ENCODE measurements at regions of chr3 and their contacts with region 1.

Region 1: DNA sequence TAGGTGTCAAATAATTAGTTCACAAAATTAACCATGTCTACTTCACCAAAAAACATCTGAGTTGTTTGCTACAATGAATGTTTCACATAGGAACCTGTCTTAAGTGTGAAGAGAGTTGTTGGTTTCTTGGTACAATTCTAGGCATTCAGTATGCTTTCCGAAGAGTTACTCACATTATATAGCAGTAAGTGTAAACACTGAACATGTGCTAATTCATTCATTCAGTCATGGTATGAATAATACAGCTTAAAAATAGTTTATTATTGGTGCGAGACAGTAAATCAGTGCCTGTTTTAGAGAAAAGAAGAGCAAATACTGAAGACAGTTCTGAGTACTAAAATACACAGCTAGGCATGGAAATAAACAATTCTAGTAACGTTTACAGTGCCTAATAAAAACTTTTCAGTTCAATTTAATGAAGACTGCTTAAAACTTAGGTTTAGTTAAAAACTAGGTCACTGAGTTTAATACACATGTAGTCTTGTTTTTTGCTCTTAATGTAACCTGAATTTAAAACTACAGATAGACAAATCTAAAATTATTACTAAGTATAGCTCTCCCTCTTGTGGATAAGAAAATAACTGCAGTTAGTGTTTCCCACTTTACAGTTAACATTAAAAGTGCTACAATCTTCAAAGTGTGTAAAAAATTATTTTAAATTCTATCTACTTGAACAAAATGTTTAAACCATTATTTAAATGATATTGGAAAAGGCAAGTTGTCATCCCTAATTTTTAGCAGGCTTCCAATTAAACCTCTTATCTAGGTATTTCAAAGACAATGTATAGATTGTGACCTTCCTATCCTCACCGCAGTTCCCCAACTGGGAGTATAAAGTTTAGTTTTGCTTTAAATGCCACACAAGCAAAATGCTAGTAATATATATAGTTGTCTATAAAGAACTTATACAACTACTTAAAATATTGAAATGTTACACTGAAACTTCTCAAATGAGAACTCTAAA is 20.1 kb upstream of the ZCWPW2 start:
- DNase-seq: peak in 2 of 9 experiments; percentile 62 to 72
- ATAC-seq: peak; percentile 32
- H3K4me3 ChIP-seq: no peak overlapping the region
- H3K4me3 Mint-ChIP-seq: no peak overlapping the region
- H3K27ac ChIP-seq: peak overlapping the region in 1 of 2 experiments; percentile 21
- H3K27ac Mint-ChIP-seq: peak overlapping the region; percentile 72
- H3K4me1 ChIP-seq: peaks cover 13% of the 10 kb centered on the region
- H3K4me1 Mint-ChIP-seq: peaks cover 31% of the 10 kb centered on the region
- H3K27me3 ChIP-seq: no peaks in the 10 kb centered on the region
- H3K27me3 Mint-ChIP-seq: no peaks in the 10 kb centered on the region
- CTCF ChIP-seq: peak; percentile 83

Region 2: DNA sequence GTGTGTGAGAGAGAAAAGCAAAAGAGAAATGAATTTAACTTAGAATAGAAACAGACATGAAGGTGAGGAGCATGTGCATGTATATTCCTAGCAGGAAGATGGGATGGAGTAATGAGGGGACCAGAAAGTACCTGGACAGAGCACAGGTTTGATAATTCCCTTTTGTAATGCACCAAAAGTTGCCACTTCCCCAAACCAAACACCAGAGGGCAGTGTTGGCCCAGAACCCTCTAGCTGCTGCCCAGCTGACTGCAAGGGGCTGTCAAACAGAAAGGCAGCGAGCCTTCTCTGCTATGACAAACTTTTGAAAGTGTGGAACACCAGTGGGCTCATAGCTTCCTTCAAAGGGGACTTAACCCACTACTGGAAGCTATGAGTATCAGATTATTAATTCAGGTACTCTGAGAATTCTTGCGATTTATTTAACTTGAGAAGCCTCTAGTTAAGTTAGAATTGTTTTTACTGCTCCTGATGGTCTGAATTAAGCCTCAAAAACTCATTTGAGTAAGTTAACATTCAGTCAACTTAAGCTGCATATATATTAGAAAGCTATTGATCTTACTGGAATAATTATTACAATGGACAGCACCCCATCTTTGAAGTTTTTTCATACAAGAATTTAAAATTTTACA is 1194.2 kb before region 1 on chr3:
- CTCF ChIA-PET with region 1: no interaction called
- POLR2A ChIA-PET with region 1: no interaction called
- intact Hi-C with region 1: loop called in 1 of 2 experiments (anchors 2 kb)
- DNase-seq: peak; percentile 5 to 77 (median 61)
- ATAC-seq: peak; percentile 78
- H3K4me3 ChIP-seq: no peak overlapping the region
- H3K4me3 Mint-ChIP-seq: no peak overlapping the region
- H3K27ac ChIP-seq: no peak overlapping the region
- H3K27ac Mint-ChIP-seq: no peak overlapping the region
- H3K4me1 ChIP-seq: no peaks in the 10 kb centered on the region
- H3K4me1 Mint-ChIP-seq: no peaks in the 10 kb centered on the region
- H3K27me3 ChIP-seq: no peaks in the 10 kb centered on the region
- H3K27me3 Mint-ChIP-seq: peaks cover 2% of the 10 kb centered on the region
- CTCF ChIP-seq: peak; percentile 91

Region 3: GRCh38 chr3:27357665-27358258 is 970.7 kb before region 1 on chr3:
- CTCF ChIA-PET with region 1: interaction called, 5 read pairs
- POLR2A ChIA-PET with region 1: no interaction called
- intact Hi-C with region 1: loop called (anchors 5 kb)
- DNase-seq: peak; percentile 11 to 77 (median 54)
- ATAC-seq: peak; percentile 87
- H3K4me3 ChIP-seq: no peak overlapping the region
- H3K4me3 Mint-ChIP-seq: no peak overlapping the region
- H3K27ac ChIP-seq: no peak overlapping the region
- H3K27ac Mint-ChIP-seq: no peak overlapping the region
- H3K4me1 ChIP-seq: peaks cover 13% of the 10 kb centered on the region
- H3K4me1 Mint-ChIP-seq: peaks cover 27% of the 10 kb centered on the region
- H3K27me3 ChIP-seq: no peaks in the 10 kb centered on the region
- H3K27me3 Mint-ChIP-seq: no peaks in the 10 kb centered on the region
- CTCF ChIP-seq: no peak

Region 4: DNA sequence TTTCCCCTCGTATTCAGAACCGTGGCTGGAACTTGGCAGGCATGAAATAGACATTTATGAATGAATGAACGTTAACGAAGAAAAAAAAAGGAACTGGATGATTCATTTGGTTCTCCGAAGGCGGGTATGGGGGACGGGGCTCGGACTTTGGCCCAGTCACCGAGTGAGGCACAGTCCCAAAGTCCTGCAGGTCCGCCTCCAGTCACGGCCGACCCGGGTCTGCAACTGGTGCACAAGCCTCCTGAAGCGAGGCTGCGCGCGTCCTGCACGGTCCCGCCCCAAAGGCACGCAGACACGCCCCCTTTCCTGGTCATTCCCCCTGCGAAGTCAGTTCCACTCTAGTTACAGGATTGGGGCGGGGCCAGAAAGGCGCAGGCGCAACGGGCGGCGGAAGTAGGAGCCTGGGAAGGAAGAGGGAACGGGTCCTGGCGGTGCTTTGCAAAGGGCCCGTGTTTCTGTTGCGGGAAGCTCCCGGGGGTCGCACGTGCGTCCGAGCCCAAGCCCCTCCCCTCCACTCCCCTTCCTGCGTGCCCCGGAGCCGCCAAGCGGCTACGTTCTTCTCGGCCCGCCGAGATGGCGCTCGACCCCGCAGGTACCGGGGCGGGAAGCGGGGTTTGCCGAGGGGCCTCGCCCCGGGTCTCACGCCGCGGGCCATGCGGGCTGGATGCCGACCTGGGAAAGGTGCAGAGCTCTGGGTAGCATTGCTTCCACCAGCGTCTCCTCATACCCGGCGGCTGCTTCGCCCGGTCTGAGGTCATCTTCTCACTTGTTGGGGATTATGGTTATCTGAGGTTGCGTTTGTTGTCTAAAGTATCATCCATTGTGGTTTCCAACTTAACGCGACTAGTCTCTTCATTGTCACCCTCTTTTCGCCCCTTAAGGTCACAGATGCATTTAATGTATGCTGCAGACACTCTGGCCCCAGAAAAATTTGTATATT is 87.0 kb before region 1 on chr3 and contains the start of gene CMC1:
- CTCF ChIA-PET with region 1: interaction called, 3 read pairs
- POLR2A ChIA-PET with region 1: no interaction called
- intact Hi-C with region 1: loop called in 1 of 2 experiments (anchors 5 kb)
- DNase-seq: peak; percentile 68 to 94 (median 90)
- ATAC-seq: peak; percentile 90
- H3K4me3 ChIP-seq: peak within 1 kb of the TSS; percentile 76 to 89
- H3K4me3 Mint-ChIP-seq: peak within 1 kb of the TSS; percentile 95
- H3K27ac ChIP-seq: peak within 1 kb of the TSS; percentile 53 to 77
- H3K27ac Mint-ChIP-seq: peak within 1 kb of the TSS; percentile 92
- H3K4me1 ChIP-seq: peaks cover 29% of the 10 kb centered on the region
- H3K4me1 Mint-ChIP-seq: peaks cover 50% of the 10 kb centered on the region
- H3K27me3 ChIP-seq: no peaks in the 10 kb centered on the region
- H3K27me3 Mint-ChIP-seq: no peaks in the 10 kb centered on the region
- CTCF ChIP-seq: no peak
- total RNA-seq, gene CMC1: 28.0 to 31.0 TPM

Region 5: DNA sequence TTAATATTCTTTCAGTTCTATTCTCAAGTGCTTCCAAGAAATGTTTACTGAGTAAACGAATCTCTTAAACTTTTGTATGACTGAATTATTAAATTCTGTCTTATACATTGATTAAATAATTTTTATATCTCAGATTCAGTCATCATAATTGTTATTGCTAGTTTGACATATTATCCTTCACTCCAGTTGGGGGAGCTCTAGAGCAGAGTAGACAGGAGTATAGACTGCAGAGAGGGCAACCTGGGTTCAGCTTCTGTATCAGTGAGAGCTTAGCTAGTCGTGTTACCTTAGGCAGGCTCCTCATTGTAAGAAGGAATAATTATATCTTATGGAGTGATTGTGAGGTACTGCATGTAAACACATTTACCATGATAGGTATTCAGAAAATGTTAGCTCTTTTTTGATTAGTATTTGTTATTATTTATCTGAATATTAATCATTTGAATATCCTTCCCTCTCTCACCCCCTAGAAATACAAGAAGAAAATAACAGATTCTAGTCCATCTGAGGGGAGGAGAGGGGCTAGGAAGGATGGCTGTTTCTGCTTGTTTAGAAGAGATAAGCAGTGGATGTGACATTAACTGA is 10.9 kb before region 1 on chr3:
- CTCF ChIA-PET with region 1: interaction called, 12 read pairs
- POLR2A ChIA-PET with region 1: no interaction called
- intact Hi-C with region 1: loop called in 1 of 2 experiments (anchors 1 kb)
- DNase-seq: peak in 5 of 9 experiments; percentile 9 to 83 (median 44)
- ATAC-seq: peak; percentile 99
- H3K4me3 ChIP-seq: no peak overlapping the region
- H3K4me3 Mint-ChIP-seq: no peak overlapping the region
- H3K27ac ChIP-seq: no peak overlapping the region
- H3K27ac Mint-ChIP-seq: no peak overlapping the region
- H3K4me1 ChIP-seq: no peaks in the 10 kb centered on the region
- H3K4me1 Mint-ChIP-seq: peaks cover 24% of the 10 kb centered on the region
- H3K27me3 ChIP-seq: no peaks in the 10 kb centered on the region
- H3K27me3 Mint-ChIP-seq: no peaks in the 10 kb centered on the region
- CTCF ChIP-seq: peak; percentile 91